ENCODE measurements at regions of chr12 and their contacts with region 1.

Region 1: DNA sequence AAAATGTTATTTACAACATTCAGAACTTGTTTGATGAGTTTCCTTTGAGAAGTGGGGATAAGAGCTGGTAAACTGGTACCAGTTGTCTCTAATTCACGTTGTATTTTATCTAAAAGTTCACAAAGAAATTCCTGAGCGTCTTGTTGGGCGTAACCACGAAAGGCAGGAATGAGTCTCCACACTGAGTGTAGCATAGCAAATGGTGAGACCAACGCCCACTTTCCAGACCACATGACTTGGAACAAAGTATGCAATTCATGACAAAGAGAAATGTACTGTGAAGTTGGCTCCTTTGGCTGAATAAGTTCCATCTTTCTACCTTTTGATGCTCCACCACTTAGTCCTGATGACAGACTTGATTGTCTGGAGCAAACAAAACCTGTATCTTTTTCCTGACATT is 18.4 kb downstream of the USP44 start:
- DNase-seq: no peak
- ATAC-seq: no peak
- H3K4me3 Mint-ChIP-seq: no peak overlapping the region
- H3K27ac Mint-ChIP-seq: no peak overlapping the region
- H3K4me1 Mint-ChIP-seq: no peaks in the 10 kb centered on the region
- H3K27me3 Mint-ChIP-seq: no peaks in the 10 kb centered on the region
- CTCF ChIP-seq: no peak

Region 2: DNA sequence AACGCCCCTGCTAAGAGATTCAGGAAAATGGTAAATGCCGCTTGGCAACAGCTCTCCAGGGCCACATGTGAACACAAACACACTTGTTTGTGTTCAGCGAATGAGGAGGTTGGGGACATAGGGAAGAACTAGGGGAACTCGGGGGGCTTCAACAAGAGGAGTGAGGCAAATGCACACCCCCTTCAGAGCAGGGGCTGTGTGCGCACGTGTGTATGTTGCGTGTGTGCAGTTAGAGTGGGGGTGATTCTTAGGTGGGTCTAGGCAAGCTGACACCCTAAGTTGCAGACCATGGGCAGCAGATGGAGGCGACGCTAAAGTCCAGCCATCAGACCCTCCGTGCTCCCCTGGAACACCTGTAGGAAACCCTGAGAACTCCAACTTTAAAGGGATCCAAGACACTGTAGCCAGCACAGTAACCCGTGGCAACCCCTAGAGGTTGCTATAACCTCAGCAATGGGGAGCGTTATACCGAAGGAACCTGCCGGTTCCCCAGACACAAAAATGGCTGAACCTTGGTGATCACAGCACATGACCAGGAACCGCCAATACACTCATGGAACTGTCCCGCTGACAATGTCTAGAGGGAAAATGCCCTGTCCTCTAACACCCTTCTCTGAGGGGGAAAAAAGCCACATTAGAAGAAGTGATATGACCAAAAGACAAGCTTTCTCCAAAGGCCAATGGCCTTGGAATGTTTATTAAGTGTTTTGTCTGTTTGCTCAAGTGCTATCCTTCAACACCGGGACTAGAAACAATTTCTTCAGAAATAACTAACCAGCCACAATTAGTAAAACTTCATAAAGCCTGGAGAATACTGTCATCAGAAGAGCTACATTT is 986.7 kb before region 1 on chr12:
- CTCF ChIA-PET with region 1: no interaction called
- POLR2A ChIA-PET with region 1: no interaction called
- intact Hi-C with region 1: loop called (anchors 2 kb)
- DNase-seq: no peak
- ATAC-seq: peak; percentile 76
- H3K4me3 Mint-ChIP-seq: no peak overlapping the region
- H3K27ac Mint-ChIP-seq: no peak overlapping the region
- H3K4me1 Mint-ChIP-seq: no peaks in the 10 kb centered on the region
- H3K27me3 Mint-ChIP-seq: no peaks in the 10 kb centered on the region
- CTCF ChIP-seq: no peak

Region 3: DNA sequence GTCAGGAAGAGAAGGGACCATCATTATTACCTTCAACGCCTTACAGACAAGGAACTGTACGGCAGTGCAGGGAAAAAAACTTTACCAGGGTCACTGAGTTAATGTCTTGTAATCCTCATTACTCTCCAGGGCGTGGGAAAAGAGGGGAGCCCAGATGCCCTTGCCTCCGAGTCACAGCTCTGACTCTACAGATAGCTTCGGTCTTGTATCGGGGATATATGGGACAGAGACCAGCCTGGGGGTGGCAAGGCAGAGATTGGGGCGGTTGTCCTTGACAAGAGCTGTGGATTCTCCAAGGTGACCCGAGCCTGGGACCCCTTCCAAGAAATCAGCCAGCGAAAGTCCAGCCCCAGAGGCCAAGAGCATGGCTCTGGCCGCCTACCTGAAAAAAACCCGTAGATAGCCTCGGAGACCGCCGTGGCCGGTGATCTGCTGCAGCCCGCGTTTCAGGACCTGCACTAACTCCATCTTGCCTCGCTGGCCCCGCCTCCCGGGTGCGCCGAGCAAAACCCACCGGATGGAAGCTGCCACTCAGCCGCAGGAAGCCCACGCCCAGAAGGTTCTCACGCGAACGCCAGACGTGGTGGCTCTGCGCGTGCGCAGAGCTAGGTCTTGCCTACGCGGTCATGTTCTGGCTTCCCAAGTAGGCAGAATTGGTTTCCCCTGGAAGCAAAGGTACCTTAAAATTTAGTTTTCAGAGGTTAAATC is 529.5 kb before region 1 on chr12 and contains the start of gene NDUFA12:
- CTCF ChIA-PET with region 1: no interaction called
- POLR2A ChIA-PET with region 1: interaction called, 10 read pairs
- intact Hi-C with region 1: no loop called
- DNase-seq: peak; percentile 89
- ATAC-seq: peak; percentile 99
- H3K4me3 Mint-ChIP-seq: peak within 1 kb of the TSS; percentile 94
- H3K27ac Mint-ChIP-seq: peak within 1 kb of the TSS; percentile 90
- H3K4me1 Mint-ChIP-seq: peaks cover 35% of the 10 kb centered on the region
- H3K27me3 Mint-ChIP-seq: no peaks in the 10 kb centered on the region
- CTCF ChIP-seq: no peak
- total RNA-seq, gene NDUFA12: 80.2 and 81.7 TPM in 2 replicates

Region 4: GRCh38 chr12:95117178-95117599 is 415.7 kb before region 1 on chr12:
- CTCF ChIA-PET with region 1: interaction called, 102 read pairs
- POLR2A ChIA-PET with region 1: interaction called, 6 read pairs
- intact Hi-C with region 1: loop called (anchors 1 kb)
- DNase-seq: no peak
- ATAC-seq: peak; percentile 84
- H3K4me3 Mint-ChIP-seq: no peak overlapping the region
- H3K27ac Mint-ChIP-seq: no peak overlapping the region
- H3K4me1 Mint-ChIP-seq: peaks cover 3% of the 10 kb centered on the region
- H3K27me3 Mint-ChIP-seq: no peaks in the 10 kb centered on the region
- CTCF ChIP-seq: no peak

Region 5: DNA sequence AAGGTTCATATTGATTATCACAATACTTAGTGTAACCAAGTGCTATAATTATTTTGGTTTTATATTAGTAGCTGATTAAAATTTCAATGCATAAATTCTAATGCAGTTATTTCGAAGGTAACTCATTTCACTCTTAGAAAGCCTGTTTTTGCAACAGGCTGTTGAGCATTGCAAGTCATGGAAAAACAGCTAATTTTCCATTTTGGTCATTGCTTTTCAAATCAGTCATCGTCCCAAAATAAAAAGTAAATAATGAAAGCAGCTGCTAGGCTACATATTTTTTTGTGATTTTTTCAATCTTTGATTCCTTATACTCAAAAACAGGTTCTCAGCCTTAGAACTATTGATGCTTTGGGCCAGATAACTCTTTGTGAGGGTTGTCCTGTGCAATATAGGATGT is 292.3 kb before region 1 on chr12:
- CTCF ChIA-PET with region 1: no interaction called
- POLR2A ChIA-PET with region 1: no interaction called
- intact Hi-C with region 1: no loop called
- DNase-seq: no peak
- ATAC-seq: no peak
- H3K4me3 Mint-ChIP-seq: no peak overlapping the region
- H3K27ac Mint-ChIP-seq: no peak overlapping the region
- H3K4me1 Mint-ChIP-seq: peaks cover 15% of the 10 kb centered on the region
- H3K27me3 Mint-ChIP-seq: no peaks in the 10 kb centered on the region
- CTCF ChIP-seq: no peak

Region 6: DNA sequence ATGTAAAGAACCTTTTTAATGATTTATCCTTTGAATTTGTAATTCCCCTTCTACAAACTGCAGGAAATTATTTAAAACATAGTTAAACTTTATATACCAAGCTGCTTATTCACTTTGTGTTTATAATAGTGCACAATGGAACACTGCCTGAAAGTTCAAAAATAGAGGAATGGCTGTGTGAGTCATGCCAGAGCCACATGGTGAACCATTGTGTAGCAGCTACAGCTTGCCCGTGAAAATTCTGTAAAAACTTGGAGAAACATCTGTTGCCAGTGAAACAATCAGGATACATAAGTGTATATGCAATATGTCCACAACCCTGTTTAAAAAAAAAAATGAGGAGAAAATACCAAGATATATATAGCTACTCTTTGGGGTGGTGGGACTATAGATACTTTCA is 255.7 kb before region 1 on chr12:
- CTCF ChIA-PET with region 1: no interaction called
- POLR2A ChIA-PET with region 1: no interaction called
- intact Hi-C with region 1: loop called (anchors 10 kb)
- DNase-seq: no peak
- ATAC-seq: no peak
- H3K4me3 Mint-ChIP-seq: no peak overlapping the region
- H3K27ac Mint-ChIP-seq: no peak overlapping the region
- H3K4me1 Mint-ChIP-seq: no peaks in the 10 kb centered on the region
- H3K27me3 Mint-ChIP-seq: no peaks in the 10 kb centered on the region
- CTCF ChIP-seq: no peak

Region 7: DNA sequence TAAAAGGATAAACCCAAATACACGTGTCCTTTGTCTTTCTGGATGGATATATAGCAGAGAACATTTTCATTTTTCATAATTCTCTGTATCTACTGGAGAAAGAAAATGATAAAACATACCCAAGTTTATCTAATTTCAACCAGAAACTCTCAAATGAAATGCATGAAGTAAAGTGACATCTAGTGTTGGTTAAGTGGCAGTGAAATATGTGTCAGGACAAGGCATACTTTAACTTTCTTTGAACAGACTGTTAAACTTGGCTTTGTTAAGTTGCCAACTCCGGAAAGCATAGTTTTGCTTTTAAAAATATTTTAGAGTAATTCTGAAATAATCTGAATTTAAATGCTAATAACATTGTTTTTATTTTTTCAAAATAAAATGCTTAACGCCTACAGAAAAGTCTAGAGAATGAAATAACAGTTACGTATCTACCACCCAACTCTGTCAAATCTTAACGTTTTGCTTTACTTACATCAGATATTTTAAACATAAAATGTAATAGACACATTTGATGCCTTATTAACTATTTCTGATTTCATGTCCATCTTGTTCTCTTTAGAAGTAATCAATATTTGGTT is 282.9 kb after region 1 on chr12:
- CTCF ChIA-PET with region 1: interaction called, 4 read pairs
- POLR2A ChIA-PET with region 1: no interaction called
- intact Hi-C with region 1: loop called (anchors 2 kb)
- DNase-seq: no peak
- ATAC-seq: no peak
- H3K4me3 Mint-ChIP-seq: no peak overlapping the region
- H3K27ac Mint-ChIP-seq: no peak overlapping the region
- H3K4me1 Mint-ChIP-seq: no peaks in the 10 kb centered on the region
- H3K27me3 Mint-ChIP-seq: peaks cover 12% of the 10 kb centered on the region
- CTCF ChIP-seq: no peak

Region 8: DNA sequence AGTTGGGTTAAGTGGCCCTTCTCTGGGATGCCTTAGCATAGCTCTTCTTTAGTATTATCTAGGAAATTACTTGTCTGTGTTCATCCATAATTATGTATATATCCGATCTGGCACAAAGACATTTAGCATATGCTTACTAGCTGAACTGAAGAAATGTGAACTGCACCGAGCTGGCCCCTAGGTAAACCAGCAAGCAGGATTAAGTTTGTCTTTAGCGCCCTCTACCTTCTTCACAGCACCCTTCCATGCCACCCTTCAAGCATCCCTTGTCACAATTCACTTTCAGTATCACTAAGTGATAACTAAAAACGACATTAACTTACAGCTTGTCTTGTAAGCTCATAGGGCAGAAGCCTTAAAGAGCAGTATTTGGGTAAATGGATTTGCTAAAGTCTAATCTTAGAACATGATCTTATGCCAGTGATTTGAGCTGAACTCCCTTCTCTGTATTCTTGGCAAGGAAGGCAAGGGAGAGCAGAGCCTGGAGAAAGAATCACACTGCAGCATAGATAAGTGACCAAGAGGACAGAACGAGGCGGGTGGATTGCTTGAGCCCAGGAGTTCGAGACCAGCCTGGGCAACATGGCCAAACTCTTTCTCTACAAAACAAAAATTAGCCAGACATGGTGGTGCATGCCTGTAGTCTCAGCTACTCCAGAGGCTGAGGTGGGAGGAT is 465.9 kb after region 1 on chr12:
- CTCF ChIA-PET with region 1: no interaction called
- POLR2A ChIA-PET with region 1: no interaction called
- intact Hi-C with region 1: loop called (anchors 1 kb)
- DNase-seq: no peak
- ATAC-seq: peak; percentile 96
- H3K4me3 Mint-ChIP-seq: no peak overlapping the region
- H3K27ac Mint-ChIP-seq: peak overlapping the region; percentile 25
- H3K4me1 Mint-ChIP-seq: peaks cover 7% of the 10 kb centered on the region
- H3K27me3 Mint-ChIP-seq: no peaks in the 10 kb centered on the region
- CTCF ChIP-seq: peak; percentile 32

Measured in activated B cell treated with CpG ODN at 0.5 μM for 24 hours (primary cell).